ENCODE measurements at regions of chr13 and their contacts with region 1.

Region 1: DNA sequence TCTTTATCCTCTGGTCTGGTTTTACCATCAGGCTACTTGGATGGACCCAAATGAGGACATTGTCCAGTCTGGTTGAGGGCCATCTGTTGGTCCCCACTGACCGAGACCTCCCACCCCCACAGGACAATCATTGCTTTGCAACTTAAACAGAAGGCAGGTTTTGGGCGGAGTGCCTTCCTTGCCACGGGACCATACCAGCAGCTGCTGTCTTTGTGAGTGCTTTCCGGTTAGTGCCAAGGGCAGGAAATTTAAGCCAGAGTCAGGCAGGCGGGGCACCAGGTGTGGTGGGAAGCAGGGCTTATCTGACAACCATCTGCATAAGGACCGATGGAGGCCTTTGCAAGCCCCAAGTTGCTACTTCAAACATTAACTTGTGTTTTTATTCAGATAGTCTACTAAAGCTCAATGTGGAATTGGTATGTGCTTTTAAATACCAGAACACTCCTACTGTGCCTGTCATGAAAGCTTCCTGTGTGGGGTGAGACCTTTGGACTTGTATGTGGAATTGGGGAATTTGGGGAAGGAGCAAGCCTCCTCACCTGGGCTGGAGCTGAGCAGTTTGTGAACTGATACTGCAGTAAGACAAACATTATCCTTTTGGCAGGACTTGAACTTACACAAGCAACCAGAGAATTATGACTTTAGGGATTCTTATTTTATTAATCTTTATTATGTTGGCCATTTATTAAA is 39.3 kb upstream of the UBE2L5 start:
- DNase-seq: peak; percentile 77
- H3K4me3 ChIP-seq: no peak overlapping the region
- H3K27ac ChIP-seq: peak overlapping the region; percentile 53
- H3K4me1 ChIP-seq: peaks cover 42% of the 10 kb centered on the region
- CTCF ChIP-seq: 0 out of 2 replicates have a peak, but pooled peaks have one; percentile 6

Region 2: GRCh38 chr13:30364133-30364532 is 18.8 kb before region 1 on chr13:
- CTCF ChIA-PET with region 1: no interaction called
- POLR2A ChIA-PET with region 1: no interaction called
- intact Hi-C with region 1: no loop called
- DNase-seq: no peak
- H3K4me3 ChIP-seq: no peak overlapping the region
- H3K27ac ChIP-seq: no peak overlapping the region
- H3K4me1 ChIP-seq: peaks cover 23% of the 10 kb centered on the region
- CTCF ChIP-seq: no peak

Region 3: DNA sequence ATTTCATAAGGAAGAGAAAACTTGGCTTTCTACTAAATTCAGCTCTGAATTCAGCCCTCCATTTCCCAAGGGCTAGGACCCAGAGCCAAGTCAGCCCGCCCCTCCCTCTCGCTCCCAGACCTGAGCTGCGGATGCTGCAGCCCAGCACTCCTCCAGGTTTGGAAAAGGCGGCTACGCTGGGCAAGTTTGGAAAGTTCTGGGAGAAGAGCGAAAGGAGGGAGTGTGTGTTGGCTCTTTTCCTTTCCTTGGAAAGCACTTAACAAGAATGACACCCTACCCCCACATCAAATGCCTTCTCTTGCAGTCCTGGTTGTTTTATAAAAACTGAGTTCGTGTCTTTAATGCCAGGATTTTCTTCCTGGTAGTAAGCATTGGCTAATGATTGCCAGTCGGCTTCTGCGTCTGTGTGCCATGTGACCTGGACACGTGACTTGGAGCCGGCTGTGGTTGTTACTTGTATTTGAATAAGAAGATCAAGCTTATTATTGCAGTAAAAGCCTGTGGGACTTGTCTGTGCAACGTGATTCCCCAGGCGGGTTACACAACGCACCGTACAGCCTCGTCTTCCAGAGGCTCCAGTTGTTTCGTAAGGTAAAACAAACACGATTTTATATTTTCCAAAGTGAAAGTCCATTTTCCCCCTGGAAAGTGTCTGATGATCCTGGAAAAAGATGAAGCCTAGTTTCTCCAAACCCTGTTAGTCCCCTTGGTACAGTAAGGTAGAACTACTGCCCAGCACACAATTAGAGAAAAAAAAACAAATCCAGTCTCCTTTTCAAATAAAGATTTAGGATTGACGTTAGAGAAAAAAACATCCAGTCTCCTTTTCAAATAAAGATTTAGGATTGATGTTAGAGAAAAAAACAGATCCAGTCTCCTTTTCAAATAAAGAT is 12.5 kb after region 1 on chr13:
- CTCF ChIA-PET with region 1: interaction called, 5 read pairs
- POLR2A ChIA-PET with region 1: interaction called, 50 read pairs
- intact Hi-C with region 1: no loop called
- DNase-seq: peak; percentile 91
- H3K4me3 ChIP-seq: peak overlapping the region; percentile 68
- H3K27ac ChIP-seq: peak overlapping the region; percentile 74
- H3K4me1 ChIP-seq: peaks cover 25% of the 10 kb centered on the region
- CTCF ChIP-seq: no peak

Region 4: GRCh38 chr13:30415430-30416030 is 32.5 kb after region 1 on chr13:
- CTCF ChIA-PET with region 1: interaction called, 7 read pairs
- POLR2A ChIA-PET with region 1: interaction called, 10 read pairs
- intact Hi-C with region 1: no loop called
- DNase-seq: peak; percentile 86
- H3K4me3 ChIP-seq: peak overlapping the region; percentile 48
- H3K27ac ChIP-seq: peak overlapping the region; percentile 92
- H3K4me1 ChIP-seq: peaks cover 84% of the 10 kb centered on the region
- CTCF ChIP-seq: no peak

Region 5: GRCh38 chr13:30720172-30720869 is 337.3 kb after region 1 on chr13:
- CTCF ChIA-PET with region 1: no interaction called
- POLR2A ChIA-PET with region 1: no interaction called
- intact Hi-C with region 1: no loop called
- DNase-seq: peak; percentile 59
- H3K4me3 ChIP-seq: no peak overlapping the region
- H3K27ac ChIP-seq: no peak overlapping the region
- H3K4me1 ChIP-seq: peaks cover 21% of the 10 kb centered on the region
- CTCF ChIP-seq: no peak